CD4-positive, alpha-beta T cell (primary cell): ENCODE measurements at regions of chr4 and their contacts with region 1.

Region 1: DNA sequence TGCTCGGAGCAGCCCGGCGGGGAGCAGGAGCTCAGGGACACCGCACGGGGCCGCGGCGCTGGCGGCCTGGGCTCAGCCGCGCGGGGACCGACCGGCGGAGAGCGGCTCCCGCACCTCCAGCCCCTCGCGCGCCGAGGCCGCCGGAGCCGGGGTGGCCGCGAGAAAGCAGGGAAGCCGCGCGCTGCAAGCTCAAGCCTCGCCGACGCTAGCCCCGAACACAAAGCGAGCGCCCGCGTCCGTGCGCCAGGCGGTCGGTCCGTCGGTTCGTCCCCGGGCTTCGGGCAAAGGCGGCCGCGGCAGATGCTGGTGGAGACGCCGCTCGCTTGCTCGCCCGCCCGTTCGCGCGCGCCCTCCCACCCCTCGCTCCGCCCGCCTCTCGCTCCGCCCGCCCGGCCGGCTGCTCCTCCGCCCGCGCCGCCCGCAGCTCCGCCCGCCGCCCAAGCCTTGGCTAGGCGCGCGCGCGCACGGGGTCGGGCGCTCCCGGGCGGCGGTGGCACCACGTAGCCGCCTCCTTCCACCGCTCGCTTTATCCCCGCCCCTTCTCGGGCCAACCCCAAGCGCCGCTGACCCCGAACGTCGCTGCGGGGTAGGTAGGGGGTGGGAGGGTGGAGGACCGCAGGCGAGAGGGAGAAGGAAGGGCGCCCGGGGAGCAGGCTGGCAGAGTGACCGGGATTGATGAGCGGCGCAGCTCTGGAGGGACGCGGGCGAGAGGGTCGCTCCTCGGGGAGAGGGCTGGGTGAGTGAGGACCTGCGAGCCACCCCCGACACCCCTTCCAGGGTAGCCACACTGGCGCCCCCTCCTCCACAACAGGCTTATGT is at the start of gene TSPAN5:
- DNase-seq: peak; percentile 56 to 93 (median 84)
- ATAC-seq: peak; percentile 67
- H3K4me3 ChIP-seq: peak within 1 kb of the TSS; percentile 89
- H3K4me3 Mint-ChIP-seq: peak within 1 kb of the TSS; percentile 89
- H3K27ac ChIP-seq: peak within 1 kb of the TSS in 1 of 2 donors; percentile 39
- H3K27ac Mint-ChIP-seq: peak within 1 kb of the TSS; percentile 98
- H3K4me1 ChIP-seq: peaks cover 50% of the 10 kb centered on the region
- H3K4me1 Mint-ChIP-seq: peaks cover 87% of the 10 kb centered on the region
- H3K27me3 ChIP-seq: no peaks in the 10 kb centered on the region
- H3K27me3 Mint-ChIP-seq: no peaks in the 10 kb centered on the region
- CTCF ChIP-seq: no peak
- total RNA-seq, gene TSPAN5: 1.8 to 2.8 TPM

Region 2: DNA sequence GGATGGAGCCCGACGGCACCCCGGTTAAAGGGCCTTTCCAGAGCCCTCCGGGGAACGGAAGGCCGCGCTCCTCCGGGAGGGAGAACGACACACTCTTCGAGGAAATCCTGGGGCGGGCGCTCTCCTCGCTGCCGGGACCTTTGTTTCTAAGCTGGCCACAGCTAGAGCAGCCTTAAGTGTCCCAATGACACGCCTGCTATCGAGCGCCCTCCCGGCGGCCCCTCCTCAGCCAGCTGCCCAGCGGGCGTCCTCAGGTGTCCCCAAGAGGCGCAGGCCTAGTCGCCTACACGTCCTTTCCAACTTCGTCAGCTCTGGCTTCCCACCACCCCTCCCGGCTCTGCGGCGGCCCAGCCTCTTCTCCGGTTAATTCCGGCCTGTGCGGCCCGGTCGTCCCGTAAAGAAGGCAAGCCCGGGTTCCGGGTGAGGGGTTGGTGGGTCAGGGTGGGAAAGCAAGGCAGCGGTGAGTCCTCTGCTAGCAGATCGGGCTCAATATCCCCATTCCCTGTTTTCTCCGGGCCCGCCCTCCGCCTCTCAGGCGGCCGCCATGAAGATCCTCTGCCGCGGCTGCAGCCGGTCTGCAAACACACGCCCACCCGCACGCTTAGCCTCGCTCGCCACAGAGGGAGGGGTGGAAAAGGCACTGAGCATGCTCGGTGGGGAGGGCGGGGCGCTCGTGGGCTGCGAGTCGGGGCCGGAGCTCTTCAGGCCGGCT is 397.8 kb before region 1 on chr4:
- CTCF ChIA-PET with region 1: no interaction called
- POLR2A ChIA-PET with region 1: interaction called, 5 read pairs
- intact Hi-C with region 1: loop called in 1 of 2 experiments (anchors 2 kb)
- DNase-seq: peak in 13 of 14 experiments; percentile 76 to 96 (median 89)
- ATAC-seq: peak; percentile 68
- H3K4me3 ChIP-seq: peak overlapping the region; percentile 96
- H3K4me3 Mint-ChIP-seq: peak overlapping the region; percentile 95
- H3K27ac ChIP-seq: peak overlapping the region; percentile 81 to 82
- H3K27ac Mint-ChIP-seq: peak overlapping the region; percentile 88
- H3K4me1 ChIP-seq: peaks cover 19% of the 10 kb centered on the region
- H3K4me1 Mint-ChIP-seq: peaks cover 61% of the 10 kb centered on the region
- H3K27me3 ChIP-seq: no peaks in the 10 kb centered on the region
- H3K27me3 Mint-ChIP-seq: no peaks in the 10 kb centered on the region
- CTCF ChIP-seq: no peak

Region 3: GRCh38 chr4:98639523-98639922 is 19.0 kb before region 1 on chr4:
- CTCF ChIA-PET with region 1: interaction called, 5 read pairs
- POLR2A ChIA-PET with region 1: interaction called, 16 read pairs
- intact Hi-C with region 1: no loop called
- DNase-seq: peak in 3 of 14 experiments; percentile 56 to 69 (median 57)
- ATAC-seq: peak; percentile 75
- H3K4me3 ChIP-seq: peak overlapping the region; percentile 34
- H3K4me3 Mint-ChIP-seq: peak overlapping the region; percentile 86
- H3K27ac ChIP-seq: peak overlapping the region; percentile 1 to 5
- H3K27ac Mint-ChIP-seq: peak overlapping the region; percentile 93
- H3K4me1 ChIP-seq: peaks cover 25% of the 10 kb centered on the region
- H3K4me1 Mint-ChIP-seq: peaks cover 63% of the 10 kb centered on the region
- H3K27me3 ChIP-seq: no peaks in the 10 kb centered on the region
- H3K27me3 Mint-ChIP-seq: no peaks in the 10 kb centered on the region
- CTCF ChIP-seq: no peak

Region 4: GRCh38 chr4:98688411-98689290 is 30.2 kb after region 1 on chr4:
- CTCF ChIA-PET with region 1: no interaction called
- POLR2A ChIA-PET with region 1: interaction called, 9 read pairs
- intact Hi-C with region 1: loop called in 1 of 2 experiments (anchors 2 kb)
- DNase-seq: peak in 4 of 14 experiments; percentile 31 to 73 (median 64)
- ATAC-seq: peak; percentile 69
- H3K4me3 ChIP-seq: no peak overlapping the region
- H3K4me3 Mint-ChIP-seq: peak overlapping the region; percentile 62
- H3K27ac ChIP-seq: peak overlapping the region in 1 of 2 donors; percentile 19
- H3K27ac Mint-ChIP-seq: peak overlapping the region; percentile 80
- H3K4me1 ChIP-seq: peaks cover 25% of the 10 kb centered on the region
- H3K4me1 Mint-ChIP-seq: peaks cover 51% of the 10 kb centered on the region
- H3K27me3 ChIP-seq: no peaks in the 10 kb centered on the region
- H3K27me3 Mint-ChIP-seq: no peaks in the 10 kb centered on the region
- CTCF ChIP-seq: no peak

Region 5: GRCh38 chr4:98706200-98706813 is 47.8 kb after region 1 on chr4:
- CTCF ChIA-PET with region 1: no interaction called
- POLR2A ChIA-PET with region 1: interaction called, 8 read pairs
- intact Hi-C with region 1: loop called (anchors 2 to 5 kb)
- DNase-seq: peak in 9 of 14 experiments; percentile 5 to 89 (median 21)
- ATAC-seq: peak; percentile 94
- H3K4me3 ChIP-seq: peak overlapping the region; percentile 35
- H3K4me3 Mint-ChIP-seq: peak overlapping the region; percentile 82
- H3K27ac ChIP-seq: peak overlapping the region in 1 of 2 donors; percentile 19
- H3K27ac Mint-ChIP-seq: peak overlapping the region; percentile 74
- H3K4me1 ChIP-seq: peaks cover 20% of the 10 kb centered on the region
- H3K4me1 Mint-ChIP-seq: peaks cover 40% of the 10 kb centered on the region
- H3K27me3 ChIP-seq: no peaks in the 10 kb centered on the region
- H3K27me3 Mint-ChIP-seq: no peaks in the 10 kb centered on the region
- CTCF ChIP-seq: no peak